ENCODE measurements at regions of chr2 and their contacts with region 1.

Region 1: GRCh38 chr2:16773080-16773713 is 107.6 kb upstream of the CYRIA start:
- DNase-seq: peak; percentile 2
- H3K4me3 ChIP-seq: no peak overlapping the region
- H3K27ac ChIP-seq: no peak overlapping the region
- H3K27me3 ChIP-seq: no peaks in the 10 kb centered on the region
- CTCF ChIP-seq: peak; percentile 59

Region 2: DNA sequence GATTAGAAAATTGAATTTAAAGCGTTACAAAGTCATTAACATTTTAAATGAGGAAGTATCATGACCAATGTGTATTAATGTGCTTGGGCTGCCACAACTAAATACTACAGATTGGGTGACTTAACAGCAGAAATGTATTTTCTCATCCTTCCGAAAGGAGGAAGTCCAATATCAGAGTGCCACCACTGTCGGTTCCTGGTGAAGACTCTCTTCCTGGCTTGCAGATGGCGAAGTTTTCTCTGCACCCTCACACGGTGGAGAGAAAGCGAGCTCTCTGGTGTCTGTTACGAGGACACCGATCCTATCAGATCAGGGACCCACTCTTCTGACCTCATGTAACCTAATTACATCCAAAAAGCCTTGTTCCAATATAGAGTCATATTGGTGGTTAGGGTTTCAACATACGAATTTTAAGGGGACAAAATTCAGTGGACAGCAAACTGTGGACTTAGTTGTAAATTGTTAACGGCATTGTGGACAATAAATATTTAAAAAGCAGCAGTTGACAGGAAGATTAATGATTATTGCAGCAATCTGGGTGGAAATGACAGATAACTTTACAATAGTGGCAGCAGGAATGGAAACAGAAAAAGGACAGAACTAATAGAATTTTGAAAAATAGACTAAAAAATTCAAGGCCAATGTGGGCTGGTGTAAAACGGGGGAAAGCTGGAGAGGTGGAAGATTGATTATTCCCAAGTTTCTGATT is 72.5 kb before region 1 on chr2:
- CTCF ChIA-PET with region 1: no interaction called
- POLR2A ChIA-PET with region 1: no interaction called
- DNase-seq: no peak
- H3K4me3 ChIP-seq: no peak overlapping the region
- H3K27ac ChIP-seq: no peak overlapping the region
- H3K27me3 ChIP-seq: no peaks in the 10 kb centered on the region
- CTCF ChIP-seq: no peak

Region 3: DNA sequence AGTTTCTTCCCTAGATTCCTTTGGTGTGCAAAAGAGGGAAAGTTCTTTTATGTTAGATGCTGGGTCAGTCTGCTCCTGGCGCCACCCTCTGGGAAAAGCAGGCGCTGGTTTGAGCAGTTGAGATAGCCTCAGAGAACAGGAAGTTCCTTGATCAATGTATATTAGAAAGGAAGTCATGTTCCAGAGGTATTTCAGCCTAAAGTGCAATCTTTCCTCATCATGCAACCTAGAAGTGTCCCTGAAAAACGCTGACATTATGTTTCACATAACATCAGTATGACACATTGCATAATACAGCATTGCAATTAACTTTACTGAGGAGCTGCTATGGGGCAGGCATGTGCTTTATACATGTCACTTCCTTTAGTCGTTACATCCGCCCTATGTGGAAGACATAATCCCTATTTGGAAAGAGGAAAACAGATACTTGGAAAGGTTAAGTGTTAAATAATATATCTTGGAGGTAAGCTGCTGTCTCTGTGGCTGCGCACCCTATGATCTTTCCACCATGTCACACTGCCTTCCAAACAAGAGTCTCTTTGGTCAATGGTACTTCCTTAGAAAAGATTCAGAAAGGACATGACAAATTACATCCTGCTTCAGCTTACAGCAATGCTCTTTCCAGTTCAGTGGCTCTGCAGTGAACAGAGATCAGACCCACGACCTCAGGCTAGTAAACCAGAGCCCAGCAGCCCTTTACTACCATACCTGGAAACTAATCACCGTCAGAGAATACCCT is 375.4 kb after region 1 on chr2:
- CTCF ChIA-PET with region 1: interaction called, 10 read pairs
- POLR2A ChIA-PET with region 1: no interaction called
- DNase-seq: no peak
- H3K4me3 ChIP-seq: no peak overlapping the region
- H3K27ac ChIP-seq: no peak overlapping the region
- H3K27me3 ChIP-seq: no peaks in the 10 kb centered on the region
- CTCF ChIP-seq: peak; percentile 63

Region 4: GRCh38 chr2:17309741-17310339 is 536.6 kb after region 1 on chr2:
- CTCF ChIA-PET with region 1: interaction called, 42 read pairs
- POLR2A ChIA-PET with region 1: no interaction called
- DNase-seq: no peak
- H3K4me3 ChIP-seq: no peak overlapping the region
- H3K27ac ChIP-seq: no peak overlapping the region
- H3K27me3 ChIP-seq: peaks cover 2% of the 10 kb centered on the region
- CTCF ChIP-seq: peak; percentile 81

Measured in AG04450 (cell line).